ENCODE measurements at regions of chr6 and their contacts with region 1.

Region 1: DNA sequence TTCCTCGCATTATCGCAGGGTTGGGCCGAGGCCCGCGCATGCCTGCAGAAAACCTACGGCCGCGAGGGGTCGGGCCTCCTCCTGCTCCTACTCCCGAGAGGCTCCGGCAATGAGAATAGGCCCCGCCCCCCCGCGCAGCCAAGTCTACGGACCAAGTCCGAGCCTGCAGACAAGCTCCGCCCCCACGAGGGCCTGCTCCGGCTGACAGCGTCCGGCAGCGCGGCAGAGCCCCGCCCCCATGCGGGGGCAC is 3.1 kb upstream of the GPSM3 start:
- DNase-seq: peak; percentile 100
- H3K4me3 Mint-ChIP-seq: peak overlapping the region; percentile 95
- H3K27ac Mint-ChIP-seq: peak overlapping the region; percentile 99
- H3K4me1 Mint-ChIP-seq: peaks cover 26% of the 10 kb centered on the region
- H3K27me3 Mint-ChIP-seq: peaks cover 8% of the 10 kb centered on the region
- CTCF ChIP-seq: peak; percentile 45

Region 2: DNA sequence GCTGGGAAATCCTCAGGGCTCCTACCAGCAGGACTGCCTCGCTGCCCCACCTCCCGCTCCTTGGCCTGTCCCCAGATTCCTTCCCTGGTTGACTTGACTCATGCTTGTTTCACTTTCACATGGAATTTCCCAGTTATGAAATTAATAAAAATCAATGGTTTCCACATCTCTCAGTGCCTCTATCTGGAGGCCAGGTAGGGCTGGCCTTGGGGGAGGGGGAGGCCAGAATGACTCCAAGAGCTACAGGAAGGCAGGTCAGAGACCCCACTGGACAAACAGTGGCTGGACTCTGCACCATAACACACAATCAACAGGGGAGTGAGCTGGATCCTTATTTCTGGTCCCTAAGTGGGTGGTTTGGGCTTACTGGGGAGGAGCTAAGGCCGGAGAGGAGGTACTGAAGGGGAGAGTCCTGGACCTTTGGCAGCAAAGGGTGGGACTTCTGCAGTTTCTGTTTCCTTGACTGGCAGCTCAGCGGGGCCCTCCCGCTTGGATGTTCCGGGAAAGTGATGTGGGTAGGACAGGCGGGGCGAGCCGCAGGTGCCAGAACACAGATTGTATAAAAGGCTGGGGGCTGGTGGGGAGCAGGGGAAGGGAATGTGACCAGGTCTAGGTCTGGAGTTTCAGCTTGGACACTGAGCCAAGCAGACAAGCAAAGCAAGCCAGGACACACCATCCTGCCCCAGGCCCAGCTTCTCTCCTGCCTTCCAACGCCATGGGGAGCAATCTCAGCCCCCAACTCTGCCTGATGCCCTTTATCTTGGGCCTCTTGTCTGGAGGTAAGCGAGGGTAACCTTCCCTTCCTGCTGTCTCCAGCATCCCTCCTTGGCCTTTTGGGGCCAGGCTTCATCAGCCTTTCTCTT is 249.8 kb before region 1 on chr6 and contains the start of gene CFB:
- CTCF ChIA-PET with region 1: no interaction called
- intact Hi-C with region 1: loop called (anchors 10 kb)
- DNase-seq: peak; percentile 98
- H3K4me3 Mint-ChIP-seq: peak within 1 kb of the TSS; percentile 77
- H3K27ac Mint-ChIP-seq: peak within 1 kb of the TSS; percentile 84
- H3K4me1 Mint-ChIP-seq: peaks cover 84% of the 10 kb centered on the region
- H3K27me3 Mint-ChIP-seq: no peaks in the 10 kb centered on the region
- CTCF ChIP-seq: no peak
- total RNA-seq, gene CFB: 944 and 1,205 TPM in 2 replicates

Region 3: DNA sequence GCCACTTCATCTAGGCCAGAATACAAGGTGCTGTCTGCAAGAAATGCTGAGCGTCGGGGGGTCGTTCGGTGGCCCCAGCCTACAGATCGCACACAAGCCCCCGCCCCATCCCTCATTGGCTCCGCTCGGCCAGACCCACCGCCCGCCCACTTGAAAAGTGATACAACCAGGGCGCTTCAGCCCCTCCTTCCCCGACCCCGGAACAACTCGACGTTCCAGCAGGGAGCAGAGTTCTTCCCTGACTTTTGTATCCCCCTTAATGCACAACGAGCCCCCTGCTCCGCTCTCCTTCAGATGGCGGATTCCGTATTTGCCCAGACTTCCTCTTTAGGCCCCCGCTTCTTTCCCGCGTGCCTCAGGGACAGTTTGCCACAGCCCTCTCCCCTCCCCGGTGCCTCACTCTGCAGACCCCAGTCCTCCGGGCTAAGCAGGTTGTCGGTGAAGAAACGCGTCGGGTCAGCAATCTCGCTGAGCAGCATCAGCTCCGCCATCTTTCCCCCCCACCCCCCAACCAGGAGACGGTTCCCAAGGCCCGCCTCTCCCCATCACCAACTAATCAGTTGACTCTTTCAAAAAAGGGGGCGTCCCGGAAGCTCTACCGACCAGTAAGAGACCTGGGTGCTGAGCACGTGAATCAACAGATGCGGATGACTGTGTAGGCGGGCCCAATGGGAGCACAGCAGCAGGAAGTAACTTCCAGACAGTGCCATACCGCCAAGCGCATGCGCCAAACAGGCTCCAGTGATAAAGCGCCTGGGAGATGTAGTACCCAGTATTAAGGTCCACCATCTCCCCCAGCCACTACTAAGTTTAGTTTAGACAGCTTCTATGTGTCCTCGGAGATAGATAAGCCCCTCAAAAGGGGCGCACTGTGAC is 67.6 kb before region 1 on chr6 and contains the start of gene ATF6B:
- CTCF ChIA-PET with region 1: interaction called, 14 read pairs
- intact Hi-C with region 1: no loop called
- DNase-seq: peak; percentile 99
- H3K4me3 Mint-ChIP-seq: peak within 1 kb of the TSS; percentile 98
- H3K27ac Mint-ChIP-seq: peak within 1 kb of the TSS; percentile 98
- H3K4me1 Mint-ChIP-seq: peaks cover 23% of the 10 kb centered on the region
- H3K27me3 Mint-ChIP-seq: no peaks in the 10 kb centered on the region
- CTCF ChIP-seq: no peak
- total RNA-seq, gene ATF6B: 185 and 196 TPM in 2 replicates

Region 4: DNA sequence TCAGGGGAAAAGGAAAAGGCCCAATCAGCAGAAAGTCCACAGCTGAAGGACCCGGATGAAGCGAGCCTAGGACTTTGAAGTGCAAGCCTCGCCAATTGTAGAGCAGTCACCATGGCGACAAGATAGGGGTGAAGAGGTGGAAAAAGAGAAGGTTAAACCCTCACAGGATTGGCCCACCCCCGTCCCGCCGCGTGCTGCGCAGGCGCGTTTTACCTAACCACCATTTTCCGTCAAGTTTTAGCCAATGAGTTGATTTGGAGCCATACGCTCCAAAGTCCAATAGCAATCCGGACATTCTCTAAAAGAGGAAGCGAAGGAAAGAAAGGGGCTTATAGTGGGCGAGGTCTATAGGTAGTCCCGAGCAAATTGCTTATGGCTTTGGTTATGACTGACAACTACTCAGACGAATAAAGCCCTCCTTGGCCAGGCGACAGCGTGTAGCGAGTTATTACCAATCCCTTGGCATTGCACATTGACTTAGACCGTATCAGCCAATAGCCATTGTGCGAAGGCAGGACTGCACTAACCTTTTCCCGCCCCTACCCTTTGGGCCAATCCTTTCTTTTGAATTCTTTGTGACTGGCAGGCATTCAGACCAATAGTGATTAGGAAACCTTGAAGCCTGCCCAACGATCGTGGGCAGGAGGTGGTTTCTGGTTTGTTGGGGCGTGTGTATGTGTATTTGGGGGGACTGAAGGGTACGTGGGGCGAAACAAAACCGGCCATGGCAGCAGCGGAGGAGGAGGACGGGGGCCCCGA is 17.6 kb before region 1 on chr6 and contains the start of gene RNF5:
- CTCF ChIA-PET with region 1: interaction called, 32 read pairs
- intact Hi-C with region 1: no loop called
- DNase-seq: peak; percentile 99
- H3K4me3 Mint-ChIP-seq: peak within 1 kb of the TSS; percentile 82
- H3K27ac Mint-ChIP-seq: peak within 1 kb of the TSS; percentile 62
- H3K4me1 Mint-ChIP-seq: peaks cover 43% of the 10 kb centered on the region
- H3K27me3 Mint-ChIP-seq: no peaks in the 10 kb centered on the region
- CTCF ChIP-seq: no peak
- total RNA-seq, gene RNF5: 85.4 and 89.6 TPM in 2 replicates

Measured in Calu3 (cell line).